ENCODE measurements at regions of chr3 and their contacts with region 1.

Region 1: DNA sequence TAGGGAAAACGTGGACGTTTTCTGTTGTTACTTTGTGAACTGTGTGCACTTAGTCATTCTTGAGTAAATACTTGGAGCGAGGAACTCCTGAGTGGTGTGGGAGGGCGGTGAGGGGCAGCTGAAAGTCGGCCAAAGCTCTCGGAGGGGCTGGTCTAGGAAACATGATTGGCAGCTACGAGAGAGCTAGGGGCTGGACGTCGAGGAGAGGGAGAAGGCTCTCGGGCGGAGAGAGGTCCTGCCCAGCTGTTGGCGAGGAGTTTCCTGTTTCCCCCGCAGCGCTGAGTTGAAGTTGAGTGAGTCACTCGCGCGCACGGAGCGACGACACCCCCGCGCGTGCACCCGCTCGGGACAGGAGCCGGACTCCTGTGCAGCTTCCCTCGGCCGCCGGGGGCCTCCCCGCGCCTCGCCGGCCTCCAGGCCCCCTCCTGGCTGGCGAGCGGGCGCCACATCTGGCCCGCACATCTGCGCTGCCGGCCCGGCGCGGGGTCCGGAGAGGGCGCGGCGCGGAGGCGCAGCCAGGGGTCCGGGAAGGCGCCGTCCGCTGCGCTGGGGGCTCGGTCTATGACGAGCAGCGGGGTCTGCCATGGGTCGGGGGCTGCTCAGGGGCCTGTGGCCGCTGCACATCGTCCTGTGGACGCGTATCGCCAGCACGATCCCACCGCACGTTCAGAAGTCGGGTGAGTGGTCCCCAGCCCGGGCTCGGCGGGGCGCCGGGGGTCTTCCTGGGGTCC is at the start of gene TGFBR2:
- DNase-seq: peak; percentile 98
- H3K4me3 Mint-ChIP-seq: peak within 1 kb of the TSS; percentile 86
- H3K27ac Mint-ChIP-seq: peak within 1 kb of the TSS; percentile 93
- H3K4me1 Mint-ChIP-seq: peaks cover 35% of the 10 kb centered on the region
- H3K27me3 Mint-ChIP-seq: no peaks in the 10 kb centered on the region
- CTCF ChIP-seq: peak; percentile 21
- total RNA-seq, gene TGFBR2: 103 and 104 TPM in 2 replicates

Region 2: DNA sequence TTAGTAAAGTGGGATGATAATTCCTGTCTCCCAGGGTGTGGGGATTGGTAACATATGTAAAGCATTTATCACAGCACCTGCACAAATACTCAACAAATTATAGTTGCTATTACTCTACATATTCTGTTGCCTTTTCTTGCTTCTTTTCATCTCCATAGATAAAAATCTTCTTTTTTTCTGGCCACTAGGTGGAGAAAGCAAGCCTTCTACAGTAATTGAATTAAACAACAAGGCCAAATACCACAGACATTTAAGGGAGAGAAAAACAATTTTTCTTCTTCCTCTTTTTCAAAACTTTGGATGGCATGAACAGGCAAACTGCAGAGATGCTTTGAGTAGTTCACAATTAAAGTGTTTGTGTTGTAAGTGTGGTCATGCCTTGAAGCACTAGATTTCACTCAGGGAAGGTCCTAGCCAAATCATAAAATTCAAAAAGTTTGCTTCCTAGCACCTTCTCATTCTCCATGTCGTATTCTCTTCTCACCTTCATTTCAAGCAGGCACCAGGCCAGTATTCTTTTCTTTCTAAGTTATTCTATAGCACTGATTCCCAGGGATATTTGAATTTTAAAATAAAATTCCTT is 493.5 kb before region 1 on chr3:
- CTCF ChIA-PET with region 1: no interaction called
- POLR2A ChIA-PET with region 1: no interaction called
- intact Hi-C with region 1: loop called (anchors 2 kb)
- DNase-seq: peak; percentile 46
- H3K4me3 Mint-ChIP-seq: no peak overlapping the region
- H3K27ac Mint-ChIP-seq: no peak overlapping the region
- H3K4me1 Mint-ChIP-seq: peaks cover 16% of the 10 kb centered on the region
- H3K27me3 Mint-ChIP-seq: no peaks in the 10 kb centered on the region
- CTCF ChIP-seq: peak; percentile 66

Region 3: GRCh38 chr3:30319713-30320112 is 286.8 kb before region 1 on chr3:
- CTCF ChIA-PET with region 1: interaction called, 4 read pairs
- POLR2A ChIA-PET with region 1: interaction called, 12 read pairs
- intact Hi-C with region 1: loop called (anchors 10 kb)
- DNase-seq: peak; percentile 77
- H3K4me3 Mint-ChIP-seq: no peak overlapping the region
- H3K27ac Mint-ChIP-seq: peak overlapping the region; percentile 46
- H3K4me1 Mint-ChIP-seq: peaks cover 23% of the 10 kb centered on the region
- H3K27me3 Mint-ChIP-seq: no peaks in the 10 kb centered on the region
- CTCF ChIP-seq: peak; percentile 24

Region 4: GRCh38 chr3:30421266-30421665 is 185.2 kb before region 1 on chr3:
- CTCF ChIA-PET with region 1: no interaction called
- POLR2A ChIA-PET with region 1: interaction called, 4 read pairs
- intact Hi-C with region 1: loop called (anchors 5 kb)
- DNase-seq: peak; percentile 70
- H3K4me3 Mint-ChIP-seq: no peak overlapping the region
- H3K27ac Mint-ChIP-seq: no peak overlapping the region
- H3K4me1 Mint-ChIP-seq: peaks cover 14% of the 10 kb centered on the region
- H3K27me3 Mint-ChIP-seq: no peaks in the 10 kb centered on the region
- CTCF ChIP-seq: no peak

Region 5: DNA sequence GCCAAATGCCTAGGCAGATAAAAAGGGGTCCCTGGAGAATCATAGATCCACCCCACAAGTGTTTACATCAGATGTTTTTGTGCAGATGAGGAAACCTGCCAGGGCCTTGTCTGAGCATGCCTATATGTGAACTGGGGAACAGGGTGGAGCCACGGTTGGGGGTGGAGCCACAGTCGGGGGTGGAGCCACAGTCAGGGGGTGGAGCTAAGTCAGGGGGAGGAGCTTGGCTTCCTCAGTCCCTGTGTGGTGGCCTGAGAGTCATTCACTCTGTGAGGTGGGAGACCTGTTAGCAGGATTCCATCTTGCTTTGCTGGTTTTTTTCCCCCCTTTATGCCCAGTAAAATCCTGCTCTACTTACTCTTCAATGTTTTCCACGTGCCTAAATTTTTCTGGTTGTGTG is 57.9 kb before region 1 on chr3:
- CTCF ChIA-PET with region 1: interaction called, 3 read pairs
- POLR2A ChIA-PET with region 1: interaction called, 27 read pairs
- intact Hi-C with region 1: loop called (anchors 2 kb)
- DNase-seq: peak; percentile 51
- H3K4me3 Mint-ChIP-seq: no peak overlapping the region
- H3K27ac Mint-ChIP-seq: peak overlapping the region; percentile 35
- H3K4me1 Mint-ChIP-seq: peaks cover 22% of the 10 kb centered on the region
- H3K27me3 Mint-ChIP-seq: no peaks in the 10 kb centered on the region
- CTCF ChIP-seq: no peak

Region 6: GRCh38 chr3:30634761-30635735 is 28.6 kb after region 1 on chr3:
- CTCF ChIA-PET with region 1: interaction called, 4 read pairs
- POLR2A ChIA-PET with region 1: interaction called, 58 read pairs
- intact Hi-C with region 1: no loop called
- DNase-seq: no peak
- H3K4me3 Mint-ChIP-seq: no peak overlapping the region
- H3K27ac Mint-ChIP-seq: no peak overlapping the region
- H3K4me1 Mint-ChIP-seq: peaks cover 47% of the 10 kb centered on the region
- H3K27me3 Mint-ChIP-seq: no peaks in the 10 kb centered on the region
- CTCF ChIP-seq: no peak

Region 7: DNA sequence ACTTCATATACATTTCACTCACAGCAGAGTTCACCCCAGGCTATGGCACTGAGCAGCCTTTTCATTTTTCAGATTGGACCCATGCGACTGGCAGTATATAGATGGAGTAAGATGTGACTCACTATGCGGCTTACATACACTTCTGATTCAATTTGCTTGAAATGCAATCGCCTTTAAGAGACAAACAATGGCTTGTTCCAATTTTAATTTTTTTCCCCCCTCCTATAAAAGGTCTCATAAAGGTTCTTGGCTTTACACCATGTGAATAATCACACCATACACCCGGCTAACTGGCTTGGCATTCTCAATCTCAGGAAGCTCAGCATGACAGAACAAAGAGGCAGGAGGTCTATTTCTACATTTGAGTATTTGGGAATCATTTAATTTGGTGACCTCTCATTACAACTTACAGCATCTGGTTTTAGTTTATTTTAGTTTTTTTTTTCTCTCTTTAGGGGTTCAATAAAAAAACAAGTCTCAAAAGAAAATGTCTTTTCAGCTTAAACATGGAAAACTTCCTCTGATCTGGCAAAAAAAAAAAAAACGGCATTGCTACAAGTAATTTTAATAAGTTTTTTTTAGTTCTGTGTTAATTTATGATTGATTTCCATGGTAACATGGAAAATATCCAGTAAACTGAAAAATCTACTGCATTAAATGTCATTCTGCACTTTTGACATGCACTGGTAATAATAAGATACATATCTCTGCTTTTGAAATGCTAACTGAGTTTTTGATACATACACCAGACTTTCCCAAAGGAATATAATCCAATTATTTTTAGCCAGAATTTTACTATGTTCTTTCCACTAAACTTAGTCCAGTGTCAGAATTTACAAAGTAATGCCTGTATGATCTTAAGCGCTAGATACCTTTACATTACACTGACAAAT is 249.2 kb after region 1 on chr3:
- CTCF ChIA-PET with region 1: no interaction called
- POLR2A ChIA-PET with region 1: no interaction called
- intact Hi-C with region 1: no loop called
- DNase-seq: peak; percentile 23
- H3K4me3 Mint-ChIP-seq: no peak overlapping the region
- H3K27ac Mint-ChIP-seq: no peak overlapping the region
- H3K4me1 Mint-ChIP-seq: no peaks in the 10 kb centered on the region
- H3K27me3 Mint-ChIP-seq: no peaks in the 10 kb centered on the region
- CTCF ChIP-seq: no peak

Measured in MCF 10A (cell line).